Gastrocnemius medialis (tissue), 4 donors: ENCODE measurements at regions of chr10 and their contacts with region 1.

Region 1: DNA sequence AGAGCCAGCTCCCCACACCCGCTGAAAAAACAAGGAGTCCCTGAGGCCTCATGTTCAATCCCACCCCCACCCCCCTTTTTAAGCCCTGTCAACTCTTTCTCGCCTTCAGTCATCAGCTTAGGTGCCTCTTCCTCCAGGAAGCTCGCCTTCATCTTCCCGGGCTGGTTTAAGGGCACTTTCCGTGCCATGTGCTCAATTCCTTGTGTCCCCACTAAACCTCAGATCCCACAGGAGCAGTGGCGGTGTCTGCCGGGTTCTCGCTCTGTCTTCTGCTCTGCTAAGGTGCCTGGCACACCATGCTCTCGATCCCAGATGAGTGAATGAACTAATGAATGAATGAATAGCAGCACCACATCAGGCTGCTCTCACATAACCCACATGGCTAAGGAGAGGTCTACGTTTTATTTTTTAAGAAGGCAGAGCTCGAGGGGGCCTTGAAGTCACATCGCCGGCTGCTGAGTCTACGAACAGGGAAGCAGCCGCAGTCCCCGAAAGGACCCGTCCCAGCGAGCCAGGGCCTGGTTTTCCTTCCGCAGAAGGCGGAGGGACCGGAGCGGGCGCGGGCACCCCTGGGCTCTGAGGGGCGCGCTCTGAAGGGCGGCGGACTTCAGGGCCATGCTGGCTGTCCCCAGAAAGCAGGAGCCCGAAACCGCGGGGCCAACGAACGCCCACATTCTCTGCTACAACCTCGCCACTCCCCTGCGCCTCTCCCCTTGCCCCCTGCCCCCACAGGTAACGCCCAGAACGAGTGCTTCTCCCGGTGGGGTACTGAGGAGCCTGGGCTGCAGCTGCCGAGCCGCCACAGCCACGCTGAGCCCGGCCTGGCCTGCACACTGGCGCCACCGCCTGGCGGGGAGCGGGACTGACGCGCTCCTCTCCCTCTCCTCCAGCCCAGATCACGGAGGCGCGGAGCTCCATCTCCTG is 73.4 kb upstream of the KCNMA1 start:
- DNase-seq: peak; percentile 28 to 50
- ATAC-seq: peak; percentile 78 to 92
- H3K4me3 ChIP-seq: peak overlapping the region; percentile 48 to 61 (median 51)
- H3K27ac ChIP-seq: no peak overlapping the region
- H3K4me1 ChIP-seq: peaks cover 0 to 5% of the 10 kb centered on the region in 2 donors
- H3K27me3 ChIP-seq: peaks cover 12 to 16% (median 12%) of the 10 kb centered on the region in 3 donors
- CTCF ChIP-seq: peak; percentile 78 to 99 (median 92)
- POLR2A ChIP-seq: no peak

Region 2: DNA sequence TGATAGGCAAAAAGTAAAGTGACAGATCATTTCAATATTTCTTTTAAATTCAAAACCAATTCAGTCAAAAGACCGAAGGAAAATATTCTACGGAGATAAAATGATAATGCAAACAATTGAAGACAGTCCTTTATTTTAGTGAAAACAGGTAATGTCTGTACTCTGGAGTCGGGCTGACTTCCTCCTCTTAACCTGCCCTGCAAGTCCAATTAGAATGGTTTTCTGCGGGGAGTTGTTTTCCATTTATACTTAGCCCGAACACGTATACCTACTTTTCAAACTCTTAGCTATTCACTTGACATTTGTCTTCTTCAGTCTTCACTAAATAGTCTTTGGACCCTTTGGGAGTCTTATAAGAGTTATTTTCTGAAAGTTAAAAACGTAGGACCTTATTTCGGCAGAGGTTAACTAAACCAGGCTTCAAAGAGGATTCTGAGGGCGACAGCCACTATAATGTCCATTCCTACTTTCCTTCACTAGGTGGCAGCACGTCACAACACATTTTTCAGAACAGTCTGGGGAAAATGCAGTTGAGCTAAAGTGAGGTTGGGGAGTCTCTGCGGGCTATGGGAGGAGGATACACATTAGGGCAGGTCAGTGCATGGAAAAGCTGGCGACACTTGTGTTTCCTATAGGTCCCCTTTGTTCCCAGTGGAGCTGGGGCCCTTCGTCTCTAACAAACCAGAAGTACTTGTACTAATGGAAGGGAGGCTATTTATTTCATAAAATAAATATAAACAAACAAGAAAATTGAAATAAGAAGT is 545.4 kb before region 1 on chr10:
- in situ Hi-C with region 1: loop called in 1 of 4 experiments (anchors 10 kb)
- intact Hi-C with region 1: loop called (anchors 5 kb)
- DNase-seq: peak; percentile 28 to 29
- ATAC-seq: peak; percentile 27 to 70
- H3K4me3 ChIP-seq: peak overlapping the region in 1 of 4 donors; percentile 22
- H3K27ac ChIP-seq: no peak overlapping the region
- H3K4me1 ChIP-seq: peaks cover 0 to 46% of the 10 kb centered on the region in 2 donors
- H3K27me3 ChIP-seq: no peaks in the 10 kb centered on the region
- CTCF ChIP-seq: peak; percentile 66 to 78 (median 74)
- POLR2A ChIP-seq: no peak

Region 3: GRCh38 chr10:77641788-77642397 is 69.1 kb before region 1 on chr10:
- in situ Hi-C with region 1: no loop called
- intact Hi-C with region 1: no loop called
- DNase-seq: peak in 1 of 2 donors; percentile 49
- ATAC-seq: peak; percentile 21 to 31
- H3K4me3 ChIP-seq: no peak overlapping the region
- H3K27ac ChIP-seq: peak overlapping the region in 1 of 4 donors; percentile 13
- H3K4me1 ChIP-seq: peaks cover 3 to 6% of the 10 kb centered on the region in 2 donors
- H3K27me3 ChIP-seq: peaks cover 0 to 3% (median 0%) of the 10 kb centered on the region in 3 donors
- CTCF ChIP-seq: peak; percentile 83 to 95 (median 90)
- POLR2A ChIP-seq: no peak

Region 4: DNA sequence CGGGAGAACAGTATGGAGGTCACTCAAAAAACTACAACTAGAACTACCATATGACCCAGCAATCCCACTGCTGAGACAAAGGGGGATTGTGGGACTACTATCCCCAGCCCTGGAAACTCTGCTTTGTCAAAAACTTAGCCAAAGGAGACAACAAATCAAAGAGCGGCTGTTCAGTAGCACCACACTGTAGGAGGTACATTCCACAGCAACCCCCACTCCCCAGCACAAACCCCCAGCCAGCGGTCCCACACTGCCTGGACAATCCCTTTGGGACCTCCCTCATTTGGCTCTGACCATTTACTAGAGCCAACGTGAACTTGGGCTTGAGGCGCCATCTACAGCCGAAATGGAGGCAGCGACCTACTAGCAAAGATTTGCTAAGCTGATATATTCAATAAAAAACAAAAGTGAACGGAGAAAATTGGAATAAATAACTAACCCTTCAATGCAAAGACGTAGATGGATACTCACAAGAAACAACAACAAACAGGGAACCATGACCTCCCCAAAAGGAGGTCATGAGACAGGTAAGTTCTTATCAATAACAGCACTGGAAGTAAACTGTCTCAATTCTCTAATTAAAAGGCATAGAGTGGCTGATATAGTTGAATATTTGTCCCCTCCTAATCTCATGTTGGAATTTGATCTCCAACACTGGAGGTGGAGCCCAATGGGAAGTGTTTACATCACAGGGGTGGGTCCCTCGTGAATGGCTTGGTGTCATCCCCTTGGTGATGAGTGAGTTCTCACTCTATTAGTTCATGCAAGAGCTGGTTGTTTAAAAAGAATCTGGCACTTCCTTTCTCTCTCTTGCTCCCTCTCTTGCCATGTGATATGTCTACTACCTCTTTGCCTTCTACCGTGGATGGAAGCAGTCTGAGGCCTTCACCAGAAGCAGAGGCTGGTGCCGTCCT is 45.6 kb after region 1 on chr10:
- in situ Hi-C with region 1: no loop called
- intact Hi-C with region 1: loop called (anchors 5 kb)
- DNase-seq: no peak
- ATAC-seq: no peak
- H3K4me3 ChIP-seq: no peak overlapping the region
- H3K27ac ChIP-seq: no peak overlapping the region
- H3K4me1 ChIP-seq: no peaks in the 10 kb centered on the region
- H3K27me3 ChIP-seq: no peaks in the 10 kb centered on the region
- CTCF ChIP-seq: peak in 3 of 5 experiments; percentile 24 to 43 (median 34)
- POLR2A ChIP-seq: no peak